ENCODE measurements at regions of chr15 and their contacts with region 1.

Region 1: GRCh38 chr15:23642413-23643044 is 5.1 kb downstream of the MAGEL2 start:
- DNase-seq: peak; percentile 57
- ATAC-seq: peak; percentile 69 to 83
- H3K4me3 ChIP-seq: no peak overlapping the region
- H3K27ac ChIP-seq: no peak overlapping the region
- H3K4me1 ChIP-seq: no peaks in the 10 kb centered on the region
- H3K27me3 ChIP-seq: peaks cover 15% of the 10 kb centered on the region
- CTCF ChIP-seq: peak; percentile 85

Region 2: DNA sequence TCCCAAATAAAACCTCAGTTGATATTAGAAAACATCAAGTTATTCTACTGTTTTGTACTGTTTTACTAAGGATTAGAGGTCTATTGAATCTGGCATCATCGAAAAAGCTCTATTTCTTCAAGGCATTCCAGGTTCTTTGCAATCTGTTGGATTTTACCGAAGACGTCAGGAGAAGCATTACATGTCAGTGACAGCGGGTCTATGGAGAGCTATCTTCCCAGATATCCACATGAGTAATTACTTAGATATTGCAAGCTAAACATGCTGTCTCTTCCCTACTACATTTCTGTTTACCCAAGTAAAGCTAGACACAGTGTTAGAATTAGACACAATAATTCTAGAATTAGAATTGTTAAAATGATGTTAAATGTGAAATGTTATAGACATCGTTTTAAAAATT is 184.6 kb before region 1 on chr15:
- intact Hi-C with region 1: no loop called
- DNase-seq: no peak
- ATAC-seq: no peak
- H3K4me3 ChIP-seq: no peak overlapping the region
- H3K27ac ChIP-seq: no peak overlapping the region
- H3K4me1 ChIP-seq: no peaks in the 10 kb centered on the region
- H3K27me3 ChIP-seq: no peaks in the 10 kb centered on the region
- CTCF ChIP-seq: no peak

Region 3: DNA sequence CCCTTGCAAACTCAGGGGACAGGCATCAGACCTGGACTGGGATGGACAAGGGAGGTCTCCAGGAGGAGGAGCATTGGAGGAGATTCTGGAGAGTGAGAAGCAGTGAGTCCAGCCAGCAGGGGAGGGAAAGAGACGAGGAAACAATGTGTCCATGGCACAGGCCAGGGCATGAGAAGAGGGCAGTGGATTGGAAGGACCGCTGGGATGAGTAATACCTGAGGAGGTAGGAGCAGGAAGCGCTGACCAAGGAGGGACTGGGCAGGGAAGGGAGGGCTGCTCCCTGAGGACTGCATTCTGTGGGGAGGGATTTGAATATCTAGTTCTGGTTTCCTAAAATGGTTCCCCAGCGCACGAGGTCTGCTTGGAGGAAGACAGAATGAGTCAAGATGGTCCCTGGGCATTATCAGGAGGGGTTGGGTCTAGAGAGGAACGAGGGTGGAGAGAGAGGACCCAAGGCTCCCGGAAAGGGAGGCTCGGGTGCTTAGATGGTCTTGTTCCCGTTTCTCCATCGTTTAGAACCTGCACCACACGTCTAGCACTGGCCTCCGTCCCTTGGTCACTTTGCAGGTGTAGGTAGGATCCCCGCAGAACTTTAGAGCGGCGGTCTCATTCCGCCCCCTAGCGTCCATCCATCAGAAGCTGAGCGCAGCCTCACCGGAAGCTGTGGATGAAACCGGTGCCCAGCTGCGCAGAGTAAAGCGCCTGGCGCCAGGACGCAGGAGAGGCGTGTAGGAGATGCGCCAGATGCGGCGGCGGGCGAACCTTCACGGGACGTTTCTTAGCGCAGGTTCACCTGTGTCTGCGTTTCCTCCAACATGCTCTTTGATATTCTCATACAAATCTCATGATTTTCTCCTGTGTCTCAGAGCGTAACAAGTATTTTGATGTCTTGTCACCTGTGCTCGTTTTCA is 235.2 kb after region 1 on chr15:
- intact Hi-C with region 1: loop called (anchors 10 kb)
- DNase-seq: peak; percentile 51
- ATAC-seq: peak; percentile 71 to 84
- H3K4me3 ChIP-seq: no peak overlapping the region
- H3K27ac ChIP-seq: no peak overlapping the region
- H3K4me1 ChIP-seq: no peaks in the 10 kb centered on the region
- H3K27me3 ChIP-seq: no peaks in the 10 kb centered on the region
- CTCF ChIP-seq: peak; percentile 63

Measured in lower lobe of right lung (tissue), 2 donors.